Activated CD4-positive, alpha-beta memory T cell treated with anti-CD3 and anti-CD28 coated beads, Interleukin-2, amount 10 ng/mL, durations not matched to agents 7 days and 5 days (primary cell): ENCODE measurements at regions of chr1 and their contacts with region 1.

Region 1: DNA sequence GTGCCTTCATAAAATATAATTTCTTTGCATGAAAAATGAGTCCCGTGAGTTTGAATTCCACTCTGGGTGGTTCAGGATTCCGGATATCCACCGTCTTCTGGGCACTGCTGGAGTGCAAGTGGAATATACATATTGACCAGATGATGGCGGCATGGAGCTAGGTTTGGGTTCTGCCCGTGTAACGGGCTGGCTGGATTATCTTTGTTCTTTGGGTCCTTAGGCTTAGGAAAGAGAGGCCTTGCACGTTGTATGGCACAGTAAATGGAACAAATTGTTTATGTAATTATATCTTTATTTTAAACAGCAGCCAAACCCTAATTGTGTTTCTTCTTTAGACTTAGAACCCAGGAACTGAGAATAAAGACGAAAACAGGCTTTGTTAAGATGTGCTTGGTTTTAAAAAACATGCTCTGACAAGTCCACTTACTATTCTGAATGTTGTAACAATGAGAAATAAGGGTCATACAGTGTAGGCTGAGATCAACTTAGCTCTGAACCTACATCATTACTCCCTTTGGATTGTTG is 13.5 kb upstream of the ACBD6 start:
- DNase-seq: peak; percentile 62
- H3K4me3 Mint-ChIP-seq: no peak overlapping the region
- H3K27ac Mint-ChIP-seq: no peak overlapping the region
- H3K4me1 Mint-ChIP-seq: peaks cover 2% of the 10 kb centered on the region
- H3K27me3 Mint-ChIP-seq: peaks cover 7% of the 10 kb centered on the region

Region 2: DNA sequence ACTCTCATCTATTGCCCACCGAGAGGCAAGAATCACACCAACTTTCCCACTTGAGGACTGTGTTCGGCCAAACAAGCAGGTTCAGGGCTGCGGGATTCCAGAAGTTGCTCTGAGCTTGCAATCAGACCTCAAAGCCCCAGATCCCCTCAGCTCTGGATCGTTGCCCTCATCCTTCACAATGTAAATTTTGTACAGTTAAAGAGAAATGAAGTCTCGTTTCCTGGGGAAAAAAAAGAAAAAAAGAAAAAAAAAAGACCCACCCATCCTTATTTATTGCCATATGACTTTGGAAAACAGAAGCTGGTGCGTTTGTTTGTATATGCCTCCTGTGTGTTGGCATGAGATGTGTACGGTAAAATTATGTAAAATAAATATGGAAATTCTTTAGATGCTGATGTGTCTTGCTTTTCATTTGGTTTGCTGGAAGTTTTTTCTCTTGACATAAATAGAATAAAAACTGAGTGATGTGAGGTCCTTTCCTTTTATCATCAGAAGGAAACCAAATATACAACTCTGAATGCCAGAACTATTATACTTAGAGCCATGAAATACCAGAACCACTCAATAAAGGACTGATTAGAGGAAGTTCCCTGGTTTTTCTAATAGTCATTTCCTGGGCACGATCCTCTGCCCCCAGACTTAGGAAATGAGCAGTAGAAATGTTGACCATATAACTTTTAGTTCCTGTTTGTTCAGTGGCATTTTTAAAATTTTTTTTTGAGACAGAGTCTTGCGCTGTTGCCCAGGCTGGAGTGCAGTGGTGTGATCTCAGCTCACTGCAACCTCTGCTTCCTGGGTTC is 237.1 kb before region 1 on chr1:
- CTCF ChIA-PET with region 1: no interaction called
- POLR2A ChIA-PET with region 1: no interaction called
- DNase-seq: no peak
- H3K4me3 Mint-ChIP-seq: no peak overlapping the region
- H3K27ac Mint-ChIP-seq: no peak overlapping the region
- H3K4me1 Mint-ChIP-seq: no peaks in the 10 kb centered on the region
- H3K27me3 Mint-ChIP-seq: no peaks in the 10 kb centered on the region

Region 3: GRCh38 chr1:180533266-180533987 is 17.5 kb after region 1 on chr1:
- CTCF ChIA-PET with region 1: interaction called, 16 read pairs
- POLR2A ChIA-PET with region 1: no interaction called
- DNase-seq: peak; percentile 72
- H3K4me3 Mint-ChIP-seq: no peak overlapping the region
- H3K27ac Mint-ChIP-seq: no peak overlapping the region
- H3K4me1 Mint-ChIP-seq: no peaks in the 10 kb centered on the region
- H3K27me3 Mint-ChIP-seq: peaks cover 17% of the 10 kb centered on the region

Region 4: DNA sequence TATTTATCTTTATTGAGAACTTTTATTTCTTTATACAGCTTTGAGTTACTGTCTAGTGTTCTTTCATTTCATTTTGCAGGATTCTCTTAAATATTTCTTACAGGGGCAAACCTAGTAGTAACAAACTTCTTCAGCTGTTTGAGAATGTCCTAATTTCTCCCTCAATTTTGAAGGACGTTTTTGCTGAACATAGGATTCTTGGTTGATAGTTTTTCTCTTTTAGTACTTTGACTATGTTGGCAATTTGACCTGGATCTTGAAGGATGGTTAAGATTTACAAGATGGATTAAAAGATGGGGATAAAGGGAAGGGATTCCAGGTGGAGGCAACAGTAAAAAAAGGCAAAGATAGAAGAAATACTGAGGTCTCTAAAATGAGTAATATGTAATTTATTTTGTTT is 154.8 kb after region 1 on chr1:
- CTCF ChIA-PET with region 1: no interaction called
- POLR2A ChIA-PET with region 1: no interaction called
- DNase-seq: no peak
- H3K4me3 Mint-ChIP-seq: no peak overlapping the region
- H3K27ac Mint-ChIP-seq: no peak overlapping the region
- H3K4me1 Mint-ChIP-seq: peaks cover 6% of the 10 kb centered on the region
- H3K27me3 Mint-ChIP-seq: no peaks in the 10 kb centered on the region

Region 5: GRCh38 chr1:180863158-180863775 is 347.3 kb after region 1 on chr1:
- CTCF ChIA-PET with region 1: interaction called, 84 read pairs
- POLR2A ChIA-PET with region 1: no interaction called
- DNase-seq: no peak
- H3K4me3 Mint-ChIP-seq: no peak overlapping the region
- H3K27ac Mint-ChIP-seq: no peak overlapping the region
- H3K4me1 Mint-ChIP-seq: no peaks in the 10 kb centered on the region
- H3K27me3 Mint-ChIP-seq: no peaks in the 10 kb centered on the region